Activated CD4-positive, alpha-beta memory T cell treated with anti-CD3 and anti-CD28 coated beads for 36 hours (primary cell): ENCODE measurements at regions of chr10 and their contacts with region 1.

Region 1: DNA sequence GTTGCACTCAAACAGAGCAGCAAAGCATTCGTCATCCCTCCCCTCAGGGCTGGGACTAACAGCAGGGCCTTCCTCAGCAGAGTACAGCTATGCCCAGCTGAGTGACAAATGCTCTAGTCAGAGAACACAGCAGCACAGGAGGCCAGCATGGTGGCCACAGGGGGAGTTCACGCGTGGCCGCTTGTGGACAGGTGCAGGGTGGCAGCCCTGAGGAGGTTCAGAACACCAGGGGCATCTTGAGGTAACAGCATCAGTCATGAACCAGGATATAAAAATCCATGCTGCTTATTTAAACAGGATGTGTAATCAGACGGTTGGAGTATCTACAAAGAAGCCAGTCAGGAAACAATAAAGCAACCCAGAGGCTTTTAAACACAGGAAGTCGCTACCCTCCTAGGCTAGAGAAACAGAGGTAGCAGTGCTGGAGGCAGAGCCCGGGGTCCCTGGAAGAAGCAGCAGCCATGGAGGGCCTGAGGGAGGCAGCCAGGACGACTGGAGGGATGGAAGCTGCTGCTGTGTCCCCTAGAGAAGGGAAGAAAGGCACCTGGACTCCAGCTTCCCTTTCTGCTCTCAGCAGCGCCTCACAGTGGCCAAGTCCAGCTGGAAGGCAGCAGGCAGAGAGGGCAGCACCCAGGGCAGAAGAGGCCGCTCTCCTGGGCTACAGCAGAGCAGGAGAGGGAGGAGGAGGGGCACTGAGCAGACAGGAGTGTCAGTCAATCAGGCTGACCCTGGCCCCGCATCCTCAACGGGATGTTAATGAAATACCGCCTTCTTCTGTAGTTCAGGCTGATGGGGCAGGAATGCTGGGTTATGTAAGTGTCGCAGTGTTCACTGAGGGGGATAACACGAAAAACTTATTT is 70.8 kb upstream of the UCN3 start:
- DNase-seq: peak; percentile 91
- H3K4me3 Mint-ChIP-seq: peak overlapping the region; percentile 86
- H3K27ac Mint-ChIP-seq: peak overlapping the region; percentile 95
- H3K4me1 Mint-ChIP-seq: peaks cover 79% of the 10 kb centered on the region
- H3K27me3 Mint-ChIP-seq: no peaks in the 10 kb centered on the region

Region 2: DNA sequence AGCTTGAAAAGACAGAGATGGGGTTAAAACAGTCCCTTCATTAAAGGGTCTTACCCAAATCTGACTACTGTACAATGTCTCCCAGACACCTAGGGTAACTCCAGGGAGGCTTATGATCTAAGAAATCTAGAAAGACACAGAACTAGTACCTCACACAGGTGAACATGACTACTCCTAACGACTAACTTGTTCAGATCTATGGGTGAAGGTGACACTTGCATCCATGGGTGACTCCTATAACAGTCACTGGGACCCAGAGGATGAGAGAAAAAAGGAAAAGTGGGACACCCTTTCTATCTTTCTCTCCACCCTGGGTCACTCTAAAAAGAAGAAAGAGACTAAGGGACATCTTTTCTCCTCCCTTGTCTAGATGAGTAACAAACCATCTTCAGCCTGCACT is 128.2 kb before region 1 on chr10:
- CTCF ChIA-PET with region 1: no interaction called
- POLR2A ChIA-PET with region 1: no interaction called
- intact Hi-C with region 1: loop called (anchors 5 kb)
- DNase-seq: no peak
- H3K4me3 Mint-ChIP-seq: no peak overlapping the region
- H3K27ac Mint-ChIP-seq: no peak overlapping the region
- H3K4me1 Mint-ChIP-seq: peaks cover 13% of the 10 kb centered on the region
- H3K27me3 Mint-ChIP-seq: peaks cover 1% of the 10 kb centered on the region

Region 3: GRCh38 chr10:5317547-5318107 is 23.7 kb after region 1 on chr10:
- CTCF ChIA-PET with region 1: interaction called, 6 read pairs
- POLR2A ChIA-PET with region 1: interaction called, 11 read pairs
- intact Hi-C with region 1: loop called (anchors 1 kb)
- DNase-seq: peak; percentile 94
- H3K4me3 Mint-ChIP-seq: peak overlapping the region; percentile 55
- H3K27ac Mint-ChIP-seq: peak overlapping the region; percentile 92
- H3K4me1 Mint-ChIP-seq: peaks cover 76% of the 10 kb centered on the region
- H3K27me3 Mint-ChIP-seq: no peaks in the 10 kb centered on the region

Region 4: DNA sequence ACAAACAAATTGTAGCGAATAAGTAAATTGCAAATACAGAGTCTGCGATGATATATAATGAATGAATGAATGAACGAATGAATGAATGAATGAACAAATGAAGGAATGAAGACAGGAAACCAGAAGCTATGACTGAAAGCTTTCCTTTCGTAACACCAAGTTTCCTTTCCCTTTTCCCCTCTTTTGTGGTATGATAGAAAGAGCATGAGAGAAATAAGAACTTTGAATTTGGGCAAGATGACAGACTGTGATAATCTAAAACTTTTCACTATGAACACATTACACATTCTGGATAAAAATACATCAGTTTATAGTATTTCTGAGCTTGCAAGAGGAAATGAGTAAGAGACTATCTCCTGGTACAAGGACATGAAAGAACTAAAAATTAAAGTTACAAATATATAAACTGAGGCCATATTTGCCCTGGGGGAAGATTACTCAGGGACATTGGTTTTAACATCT is 62.4 kb after region 1 on chr10:
- CTCF ChIA-PET with region 1: interaction called, 4 read pairs
- POLR2A ChIA-PET with region 1: no interaction called
- intact Hi-C with region 1: loop called (anchors 1 kb)
- DNase-seq: no peak
- H3K4me3 Mint-ChIP-seq: no peak overlapping the region
- H3K27ac Mint-ChIP-seq: no peak overlapping the region
- H3K4me1 Mint-ChIP-seq: peaks cover 14% of the 10 kb centered on the region
- H3K27me3 Mint-ChIP-seq: peaks cover 4% of the 10 kb centered on the region

Region 5: DNA sequence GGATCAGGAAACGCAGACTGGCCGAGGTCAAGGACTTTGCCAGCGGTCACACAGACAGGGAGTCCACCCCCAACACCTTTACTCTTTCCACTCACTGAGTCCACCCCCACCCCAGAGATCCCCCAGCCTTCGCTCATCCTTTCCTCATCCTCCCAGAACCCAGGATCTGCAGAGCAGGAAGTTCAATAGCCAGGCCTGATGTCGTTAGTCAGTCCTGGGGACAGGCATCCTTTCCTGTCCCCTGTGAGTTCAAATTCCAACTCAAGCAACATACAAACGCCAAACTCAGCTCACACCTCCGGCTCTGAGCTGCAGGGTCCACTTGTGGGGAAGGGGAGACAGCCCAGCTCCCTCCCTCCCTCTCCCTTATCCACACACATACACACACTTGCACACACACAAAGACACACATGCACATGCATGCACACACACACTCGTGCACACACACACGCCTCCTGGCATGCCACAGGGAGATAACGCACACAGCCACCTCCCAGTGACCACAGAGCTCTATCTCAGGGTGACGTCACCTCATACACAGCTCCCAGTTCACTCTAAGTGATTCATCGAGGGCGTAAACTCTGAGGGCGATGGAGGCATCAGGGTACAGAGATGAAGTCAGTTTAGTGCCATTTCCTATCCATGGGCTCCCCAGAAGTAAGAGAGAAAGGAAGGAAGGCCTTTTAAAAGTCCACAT is 254.8 kb after region 1 on chr10:
- CTCF ChIA-PET with region 1: no interaction called
- POLR2A ChIA-PET with region 1: no interaction called
- intact Hi-C with region 1: loop called (anchors 10 kb)
- DNase-seq: peak; percentile 78
- H3K4me3 Mint-ChIP-seq: no peak overlapping the region
- H3K27ac Mint-ChIP-seq: no peak overlapping the region
- H3K4me1 Mint-ChIP-seq: peaks cover 27% of the 10 kb centered on the region
- H3K27me3 Mint-ChIP-seq: no peaks in the 10 kb centered on the region